Caco-2 (cell line): ENCODE measurements at regions of chr1 and their contacts with region 1.

Region 1: GRCh38 chr1:201023517-201023902 is at the start of gene KIF21B:
- DNase-seq: peak; percentile 87 to 94
- H3K4me3 ChIP-seq: peak within 1 kb of the TSS; percentile 63
- H3K4me3 Mint-ChIP-seq: peak within 1 kb of the TSS; percentile 66
- H3K27ac Mint-ChIP-seq: no peak within 1 kb of the TSS
- H3K4me1 ChIP-seq: peaks cover 21% of the 10 kb centered on the region
- H3K4me1 Mint-ChIP-seq: peaks cover 25% of the 10 kb centered on the region
- H3K27me3 ChIP-seq: no peaks in the 10 kb centered on the region; the same call in 1 of the 2 replicates
- H3K27me3 Mint-ChIP-seq: peaks cover 3% of the 10 kb centered on the region
- CTCF ChIP-seq: no peak
- total RNA-seq, gene KIF21B: 2.4 and 2.6 TPM in 2 replicates

Region 2: GRCh38 chr1:200917291-200917817 is 106.2 kb before region 1 on chr1:
- CTCF ChIA-PET with region 1: no interaction called
- POLR2A ChIA-PET with region 1: no interaction called
- intact Hi-C with region 1: no loop called
- DNase-seq: peak in 1 of 2 experiments; percentile 43
- H3K4me3 ChIP-seq: no peak overlapping the region
- H3K4me3 Mint-ChIP-seq: no peak overlapping the region
- H3K27ac Mint-ChIP-seq: peak overlapping the region; percentile 75
- H3K4me1 ChIP-seq: peaks cover 7% of the 10 kb centered on the region
- H3K4me1 Mint-ChIP-seq: peaks cover 10% of the 10 kb centered on the region
- H3K27me3 ChIP-seq: no peaks in the 10 kb centered on the region
- H3K27me3 Mint-ChIP-seq: no peaks in the 10 kb centered on the region
- CTCF ChIP-seq: no peak

Region 3: GRCh38 chr1:200979574-200980451 is 43.7 kb before region 1 on chr1:
- CTCF ChIA-PET with region 1: no interaction called
- POLR2A ChIA-PET with region 1: no interaction called
- intact Hi-C with region 1: loop called (anchors 5 kb)
- DNase-seq: peak in 1 of 2 experiments; percentile 48
- H3K4me3 ChIP-seq: no peak overlapping the region
- H3K4me3 Mint-ChIP-seq: no peak overlapping the region
- H3K27ac Mint-ChIP-seq: no peak overlapping the region
- H3K4me1 ChIP-seq: no peaks in the 10 kb centered on the region
- H3K4me1 Mint-ChIP-seq: no peaks in the 10 kb centered on the region
- H3K27me3 ChIP-seq: no peaks in the 10 kb centered on the region
- H3K27me3 Mint-ChIP-seq: no peaks in the 10 kb centered on the region
- CTCF ChIP-seq: peak; percentile 36 to 52